ENCODE measurements at regions of chr2 and their contacts with region 1.

Region 1: GRCh38 chr2:161308178-161308955 is at the start of gene PSMD14:
- DNase-seq: peak; percentile 75 to 93 (median 88)
- ATAC-seq: peak; percentile 89
- H3K4me3 ChIP-seq: peak within 1 kb of the TSS; percentile 79 to 89
- H3K4me3 Mint-ChIP-seq: peak within 1 kb of the TSS; percentile 96
- H3K27ac ChIP-seq: peak within 1 kb of the TSS; percentile 67 to 89
- H3K27ac Mint-ChIP-seq: peak within 1 kb of the TSS; percentile 97
- H3K4me1 ChIP-seq: peaks cover 20% of the 10 kb centered on the region
- H3K4me1 Mint-ChIP-seq: peaks cover 40% of the 10 kb centered on the region
- H3K27me3 ChIP-seq: no peaks in the 10 kb centered on the region
- H3K27me3 Mint-ChIP-seq: no peaks in the 10 kb centered on the region
- CTCF ChIP-seq: no peak
- total RNA-seq, gene PSMD14: 28.3 to 29.8 TPM

Region 2: GRCh38 chr2:161165811-161166210 is 142.6 kb before region 1 on chr2:
- CTCF ChIA-PET with region 1: no interaction called
- POLR2A ChIA-PET with region 1: no interaction called
- intact Hi-C with region 1: loop called in 1 of 2 experiments (anchors 2 kb)
- DNase-seq: peak in 1 of 9 experiments; percentile 19
- ATAC-seq: no peak
- H3K4me3 ChIP-seq: no peak overlapping the region
- H3K4me3 Mint-ChIP-seq: no peak overlapping the region
- H3K27ac ChIP-seq: peak overlapping the region in 1 of 2 experiments; percentile 72
- H3K27ac Mint-ChIP-seq: peak overlapping the region; percentile 41
- H3K4me1 ChIP-seq: peaks cover 32% of the 10 kb centered on the region
- H3K4me1 Mint-ChIP-seq: peaks cover 82% of the 10 kb centered on the region
- H3K27me3 ChIP-seq: no peaks in the 10 kb centered on the region
- H3K27me3 Mint-ChIP-seq: no peaks in the 10 kb centered on the region
- CTCF ChIP-seq: no peak

Region 3: GRCh38 chr2:161243905-161244304 is 64.5 kb before region 1 on chr2:
- CTCF ChIA-PET with region 1: no interaction called
- POLR2A ChIA-PET with region 1: interaction called, 3 read pairs
- intact Hi-C with region 1: loop called (anchors 1 to 2 kb)
- DNase-seq: peak in 3 of 9 experiments; percentile 7 to 17 (median 17)
- ATAC-seq: no peak
- H3K4me3 ChIP-seq: peak overlapping the region; percentile 40 to 54
- H3K4me3 Mint-ChIP-seq: peak overlapping the region; percentile 89
- H3K27ac ChIP-seq: peak overlapping the region; percentile 52 to 55
- H3K27ac Mint-ChIP-seq: peak overlapping the region; percentile 94
- H3K4me1 ChIP-seq: peaks cover 25% of the 10 kb centered on the region
- H3K4me1 Mint-ChIP-seq: peaks cover 58% of the 10 kb centered on the region
- H3K27me3 ChIP-seq: no peaks in the 10 kb centered on the region
- H3K27me3 Mint-ChIP-seq: peaks cover 6% of the 10 kb centered on the region
- CTCF ChIP-seq: no peak

Region 4: DNA sequence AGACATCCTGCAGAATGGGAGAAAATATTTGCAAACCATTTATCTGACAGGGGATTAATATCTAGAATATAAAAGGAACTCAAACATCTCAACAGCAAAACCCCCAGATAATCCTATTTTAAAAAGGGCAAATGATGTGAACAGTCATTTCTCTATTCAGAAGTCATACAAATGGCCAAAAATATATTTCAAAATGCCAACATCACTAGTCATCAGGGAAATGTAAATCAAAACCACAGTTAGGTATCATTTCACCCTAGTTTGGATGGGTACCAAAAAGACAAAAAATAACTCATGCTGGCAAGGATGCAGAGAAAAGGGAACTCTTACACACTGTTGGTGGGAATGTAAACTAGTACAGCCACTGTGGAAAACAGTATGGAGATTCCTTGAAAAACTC is 177.7 kb after region 1 on chr2:
- CTCF ChIA-PET with region 1: no interaction called
- POLR2A ChIA-PET with region 1: no interaction called
- intact Hi-C with region 1: no loop called
- DNase-seq: no peak
- ATAC-seq: no peak
- H3K4me3 ChIP-seq: no peak overlapping the region
- H3K4me3 Mint-ChIP-seq: no peak overlapping the region
- H3K27ac ChIP-seq: no peak overlapping the region
- H3K27ac Mint-ChIP-seq: no peak overlapping the region
- H3K4me1 ChIP-seq: no peaks in the 10 kb centered on the region
- H3K4me1 Mint-ChIP-seq: no peaks in the 10 kb centered on the region
- H3K27me3 ChIP-seq: no peaks in the 10 kb centered on the region
- H3K27me3 Mint-ChIP-seq: peaks cover 12% of the 10 kb centered on the region
- CTCF ChIP-seq: no peak

Region 5: DNA sequence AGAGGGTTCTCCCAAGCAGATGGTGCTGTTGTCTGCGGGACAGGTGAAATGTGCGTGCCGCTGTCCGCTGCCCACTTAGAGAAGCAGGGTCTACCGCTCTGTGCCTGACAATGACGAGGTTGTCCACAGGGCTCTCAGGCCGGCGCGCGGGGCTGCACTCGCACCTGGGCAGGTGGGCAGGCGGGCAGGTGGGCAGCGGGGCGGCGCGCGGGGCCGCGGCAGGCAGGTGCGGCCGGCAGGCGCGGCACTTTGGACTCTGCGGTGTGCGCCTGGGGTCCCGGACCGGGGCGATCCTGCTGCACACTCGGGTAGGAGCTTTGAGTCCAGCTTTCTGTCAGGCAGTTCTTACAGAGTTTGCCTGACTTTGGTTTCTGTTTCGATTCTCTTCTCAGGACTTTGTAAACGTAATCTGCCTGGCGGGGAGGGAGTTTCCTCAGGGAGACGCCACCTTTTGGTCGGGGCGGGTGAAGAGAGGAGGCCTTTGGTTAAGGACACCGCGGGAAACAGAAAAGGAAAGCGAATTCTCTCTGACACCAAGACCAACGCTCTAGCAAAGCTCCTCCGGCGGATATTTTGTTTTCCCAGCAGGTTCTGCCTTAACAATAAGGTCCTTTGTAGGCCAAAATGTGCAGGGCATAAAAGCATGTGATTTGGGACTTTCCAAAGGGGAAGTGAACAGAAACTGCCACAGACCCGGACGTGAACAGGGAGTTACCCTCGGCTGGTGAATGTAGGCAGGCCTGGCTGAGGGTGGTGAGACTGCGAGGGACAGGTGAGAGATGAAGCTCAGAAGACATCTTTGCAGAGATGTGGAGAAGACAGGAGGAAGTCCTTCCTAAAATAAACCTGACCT is 1010.2 kb after region 1 on chr2 and contains the start of gene IFIH1:
- CTCF ChIA-PET with region 1: no interaction called
- POLR2A ChIA-PET with region 1: no interaction called
- intact Hi-C with region 1: loop called in 1 of 2 experiments (anchors 10 kb)
- DNase-seq: peak; percentile 40 to 94 (median 68)
- ATAC-seq: peak; percentile 82
- H3K4me3 ChIP-seq: peak within 1 kb of the TSS; percentile 64 to 76
- H3K4me3 Mint-ChIP-seq: peak within 1 kb of the TSS; percentile 97
- H3K27ac ChIP-seq: peak within 1 kb of the TSS; percentile 92 to 95
- H3K27ac Mint-ChIP-seq: peak within 1 kb of the TSS; percentile 99
- H3K4me1 ChIP-seq: peaks cover 45% of the 10 kb centered on the region
- H3K4me1 Mint-ChIP-seq: peaks cover 65% of the 10 kb centered on the region
- H3K27me3 ChIP-seq: no peaks in the 10 kb centered on the region
- H3K27me3 Mint-ChIP-seq: no peaks in the 10 kb centered on the region
- CTCF ChIP-seq: no peak
- total RNA-seq, gene IFIH1: 30.8 to 32.5 TPM

Region 6: DNA sequence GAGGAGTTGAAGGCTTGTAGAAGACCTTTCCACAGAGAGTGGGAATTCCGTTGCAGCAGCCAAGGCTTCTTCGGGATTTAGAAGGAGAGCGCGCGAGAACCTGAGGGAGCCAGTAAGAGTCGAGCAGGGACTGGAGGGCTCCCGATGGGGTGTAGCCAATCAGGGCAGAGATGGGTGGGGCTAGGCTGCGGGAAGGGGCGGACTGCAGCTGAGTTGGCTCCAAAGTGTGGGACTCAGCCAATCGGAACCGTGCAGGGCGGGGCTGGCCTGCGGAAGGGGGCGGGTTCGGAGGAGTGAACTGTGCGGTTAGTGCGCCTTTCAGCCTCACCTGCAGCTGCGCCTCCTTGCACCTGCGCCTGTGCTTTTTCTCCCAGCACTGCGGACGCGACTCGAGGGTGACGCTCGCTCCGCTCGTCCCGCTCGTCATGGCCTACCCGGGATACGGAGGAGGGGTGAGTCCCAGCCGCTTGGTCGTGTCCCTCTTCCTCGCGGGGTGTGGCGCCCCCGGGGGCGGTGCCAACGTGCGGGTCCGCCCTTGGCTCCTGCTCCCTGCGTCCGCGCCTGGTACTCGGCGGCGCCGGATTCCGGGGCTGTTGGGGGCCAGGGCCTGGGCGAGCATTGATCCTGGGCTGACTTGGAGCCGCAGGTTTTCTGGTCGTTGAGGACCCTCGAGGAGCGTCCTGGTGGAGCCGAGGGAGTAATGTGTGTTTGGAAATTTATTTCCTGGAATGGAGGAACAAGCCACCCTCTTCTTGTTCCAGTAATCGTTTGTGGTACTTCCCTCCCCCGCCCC is 1035.7 kb after region 1 on chr2 and contains the start of gene GCA:
- CTCF ChIA-PET with region 1: no interaction called
- POLR2A ChIA-PET with region 1: no interaction called
- intact Hi-C with region 1: loop called in 1 of 2 experiments (anchors 10 kb)
- DNase-seq: peak; percentile 95 to 98 (median 98)
- ATAC-seq: peak; percentile 98
- H3K4me3 ChIP-seq: peak within 1 kb of the TSS; percentile 71 to 81
- H3K4me3 Mint-ChIP-seq: peak within 1 kb of the TSS; percentile 91
- H3K27ac ChIP-seq: peak within 1 kb of the TSS in 1 of 2 experiments; percentile 34
- H3K27ac Mint-ChIP-seq: peak within 1 kb of the TSS; percentile 80
- H3K4me1 ChIP-seq: peaks cover 8% of the 10 kb centered on the region
- H3K4me1 Mint-ChIP-seq: peaks cover 17% of the 10 kb centered on the region
- H3K27me3 ChIP-seq: no peaks in the 10 kb centered on the region
- H3K27me3 Mint-ChIP-seq: no peaks in the 10 kb centered on the region
- CTCF ChIP-seq: no peak
- total RNA-seq, gene GCA: 3.2 to 4.0 TPM